Left lung (tissue), 14 donors: ENCODE measurements at regions of chr7 and their contacts with region 1.

Region 1: DNA sequence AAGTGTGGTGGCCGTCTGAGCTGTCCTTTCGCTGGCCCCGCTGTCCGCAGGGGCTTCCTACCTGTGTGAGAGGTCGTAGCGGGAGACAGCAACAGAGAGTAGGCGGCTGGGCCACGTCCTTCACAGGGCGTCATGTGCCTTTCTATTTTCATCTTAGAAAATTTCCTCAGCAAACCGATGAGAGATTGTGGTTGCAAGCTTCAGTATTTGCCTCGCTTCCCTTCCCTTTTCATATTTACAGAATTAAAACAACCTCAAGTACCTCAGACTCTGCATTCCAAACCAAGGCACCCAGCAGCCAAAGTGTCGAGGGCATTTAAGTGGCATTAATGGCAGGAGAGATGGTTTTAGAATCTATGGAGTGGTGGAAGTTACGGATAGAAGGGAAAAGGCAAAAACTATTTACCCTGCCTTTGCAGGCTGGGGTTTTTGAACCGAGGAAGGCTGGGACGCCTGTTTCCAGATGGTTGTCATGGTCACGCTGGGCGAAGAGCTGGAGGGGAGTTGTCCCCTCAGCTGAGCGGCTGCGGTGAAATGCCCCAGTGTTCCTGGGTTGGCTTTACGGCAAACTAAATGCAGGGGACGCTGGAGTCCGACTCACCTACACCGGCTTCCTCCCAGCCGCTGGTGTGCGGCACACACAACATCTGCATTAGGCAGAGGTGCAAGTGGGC is 41.9 kb downstream of the WIPI2 start:
- DNase-seq: peak in 1 of 4 donors; percentile 64
- ATAC-seq: peak; percentile 69
- H3K4me3 ChIP-seq: no peak overlapping the region
- H3K27ac ChIP-seq: peak overlapping the region; percentile 59 to 80
- H3K4me1 ChIP-seq: peaks cover 11 to 34% of the 10 kb centered on the region in 2 donors
- H3K27me3 ChIP-seq: no peaks in the 10 kb centered on the region
- CTCF ChIP-seq: no peak

Region 2: GRCh38 chr7:5354460-5355232 is 122.7 kb after region 1 on chr7:
- intact Hi-C with region 1: loop called in 1 of 2 experiments (anchors 10 kb)
- DNase-seq: peak in 1 of 4 donors; percentile 66
- ATAC-seq: peak; percentile 14
- H3K4me3 ChIP-seq: no peak overlapping the region
- H3K27ac ChIP-seq: peak overlapping the region in 1 of 2 donors; percentile 33
- H3K4me1 ChIP-seq: peaks cover 11 to 31% of the 10 kb centered on the region in 2 donors
- H3K27me3 ChIP-seq: no peaks in the 10 kb centered on the region
- CTCF ChIP-seq: no peak